GM12878 (cell line): ENCODE measurements at regions of chr1 and their contacts with region 1.

Region 1: GRCh38 chr1:234963180-234963903 is 165.3 kb downstream of the TOMM20 start:
- DNase-seq: peak; percentile 97
- ATAC-seq: peak; percentile 79
- H3K4me3 ChIP-seq: peak overlapping the region; percentile 45; the same call in 1 of the 2 replicates
- H3K27ac ChIP-seq: peak overlapping the region; percentile 96
- H3K4me1 ChIP-seq: peaks cover 59% of the 10 kb centered on the region
- H3K27me3 ChIP-seq: no peaks in the 10 kb centered on the region
- CTCF ChIP-seq: no peak
- EP300 ChIP-seq: peak; percentile 95 to 99
- POLR2A ChIP-seq: no peak
- RAD21 ChIP-seq: 0 out of 2 replicates have a peak, but pooled peaks have one; percentile 24

Region 2: GRCh38 chr1:234373064-234373958 is 590.0 kb before region 1 on chr1 and contains the start of gene COA6:
- CTCF ChIA-PET with region 1: no interaction called
- POLR2A ChIA-PET with region 1: no interaction called
- RAD21 ChIA-PET with region 1: no interaction called
- SMC1A ChIA-PET with region 1: no interaction called
- in situ Hi-C with region 1: no loop called
- intact Hi-C with region 1: no loop called
- DNase-seq: peak; percentile 94
- ATAC-seq: peak; percentile 93
- H3K4me3 ChIP-seq: peak within 1 kb of the TSS; percentile 86
- H3K27ac ChIP-seq: peak within 1 kb of the TSS; percentile 95
- H3K4me1 ChIP-seq: peaks cover 6% of the 10 kb centered on the region; the same call in 1 of the 2 replicates
- H3K27me3 ChIP-seq: no peaks in the 10 kb centered on the region; a peak in 1 of 4 replicates
- CTCF ChIP-seq: no peak; a peak in 1 of 6 replicates
- EP300 ChIP-seq: 0 out of 4 replicates have a peak, but pooled peaks of 1 of the 2 experiments have one; percentile 25
- POLR2A ChIP-seq: peak; percentile 90
- RAD21 ChIP-seq: no peak
- polyA plus RNA-seq, gene COA6: 117 to 145 TPM

Region 3: DNA sequence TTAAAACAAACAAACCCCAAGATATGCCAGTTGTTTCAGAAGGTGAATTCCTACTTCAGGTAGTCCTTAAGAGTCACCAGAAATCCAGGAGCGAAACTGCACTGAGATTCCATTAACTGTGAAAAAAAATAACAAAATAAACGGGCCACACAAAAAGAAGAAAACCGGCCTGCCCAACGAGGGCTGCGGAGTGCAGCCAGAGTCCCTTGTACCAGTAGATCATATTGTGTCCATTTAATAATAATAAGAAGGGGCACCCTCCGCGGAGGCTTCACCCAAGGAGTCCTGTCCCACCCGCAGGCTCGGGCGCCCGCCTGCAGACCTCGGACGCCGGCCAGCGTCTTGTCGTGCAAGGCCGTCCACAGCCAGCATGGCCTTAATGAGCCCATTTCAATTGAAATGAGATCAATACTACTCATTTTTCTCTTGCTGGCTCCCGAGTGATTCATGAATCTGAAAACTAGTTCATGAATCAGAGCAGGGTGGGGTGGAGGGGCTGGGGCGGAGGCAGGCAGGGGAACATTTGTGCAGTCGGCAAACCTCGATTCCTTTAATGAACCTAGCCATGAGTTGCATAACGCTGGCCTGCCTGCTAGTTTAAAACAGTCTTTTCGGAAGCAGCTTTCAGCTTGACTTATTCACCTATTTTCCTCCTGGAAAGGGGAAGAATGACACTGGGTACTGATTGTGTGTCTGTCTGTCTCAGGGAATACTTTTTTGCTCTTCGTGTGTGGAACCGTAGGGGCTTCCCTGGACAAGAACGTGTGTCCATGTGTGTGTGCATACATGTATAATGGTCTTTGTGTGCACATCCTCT is 240.2 kb before region 1 on chr1:
- CTCF ChIA-PET with region 1: no interaction called
- POLR2A ChIA-PET with region 1: interaction called, 4 read pairs
- RAD21 ChIA-PET with region 1: interaction called, 15 read pairs
- SMC1A ChIA-PET with region 1: interaction called, 4 read pairs
- in situ Hi-C with region 1: no loop called
- intact Hi-C with region 1: no loop called
- DNase-seq: no peak
- ATAC-seq: no peak
- H3K4me3 ChIP-seq: no peak overlapping the region
- H3K27ac ChIP-seq: peak overlapping the region; percentile 94
- H3K4me1 ChIP-seq: peaks cover 49% of the 10 kb centered on the region
- H3K27me3 ChIP-seq: no peaks in the 10 kb centered on the region
- CTCF ChIP-seq: no peak
- EP300 ChIP-seq: no peak
- POLR2A ChIP-seq: no peak
- RAD21 ChIP-seq: no peak

Region 4: DNA sequence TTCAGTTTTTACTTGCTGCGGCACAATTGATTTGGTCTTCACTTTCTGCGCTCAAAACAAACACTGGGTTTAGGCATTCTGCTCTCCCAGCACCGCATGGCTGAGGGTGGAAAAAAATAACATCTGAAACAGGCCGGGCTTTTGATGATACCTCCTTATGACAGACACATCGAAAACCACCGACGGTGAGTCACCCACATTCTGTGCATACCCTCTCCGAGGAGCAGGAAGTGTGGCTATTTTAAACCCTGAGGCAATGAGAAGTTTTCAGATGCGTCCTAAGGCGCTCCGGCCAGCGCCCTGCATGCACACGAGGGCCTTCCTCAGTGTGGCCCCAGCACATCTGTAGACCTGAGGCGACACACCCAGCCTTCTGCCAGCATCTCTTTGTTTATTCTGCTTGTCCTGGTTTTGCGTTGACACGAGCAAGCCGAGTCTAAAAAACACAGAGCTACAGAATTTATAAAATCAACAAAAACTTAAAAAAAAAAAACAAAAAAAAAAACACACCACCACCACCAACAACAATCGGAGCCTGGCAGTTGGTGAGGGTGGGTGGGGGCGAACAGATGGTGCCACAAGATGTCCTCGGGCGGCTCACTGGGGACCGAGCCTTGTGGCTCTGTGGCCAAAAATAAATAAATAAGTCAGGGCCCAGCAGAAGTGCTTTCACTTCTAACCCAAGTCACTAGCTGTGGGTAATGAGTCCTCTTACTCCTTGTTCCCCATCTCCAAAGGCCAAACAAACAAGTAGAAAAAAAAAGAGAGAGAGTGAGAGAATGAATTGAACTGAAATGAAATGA is 190.8 kb before region 1 on chr1:
- CTCF ChIA-PET with region 1: interaction called, 3 read pairs
- POLR2A ChIA-PET with region 1: interaction called, 5 read pairs
- RAD21 ChIA-PET with region 1: interaction called, 9 read pairs
- SMC1A ChIA-PET with region 1: interaction called, 7 read pairs
- in situ Hi-C with region 1: no loop called
- intact Hi-C with region 1: loop called (anchors 1 kb)
- DNase-seq: peak; percentile 97
- ATAC-seq: peak; percentile 92
- H3K4me3 ChIP-seq: peak overlapping the region; percentile 13; the same call in 1 of the 2 replicates
- H3K27ac ChIP-seq: peak overlapping the region; percentile 89
- H3K4me1 ChIP-seq: peaks cover 37% of the 10 kb centered on the region
- H3K27me3 ChIP-seq: peaks cover 6 to 11% of the 10 kb centered on the region in 2 experiments; a peak in 3 of 4 replicates
- CTCF ChIP-seq: no peak
- EP300 ChIP-seq: peak; percentile 88 to 93; a peak in 3 of 4 replicates
- POLR2A ChIP-seq: peak; percentile 77
- RAD21 ChIP-seq: 0 out of 2 replicates have a peak, but pooled peaks have one; percentile 13

Region 5: GRCh38 chr1:234871710-234872271 is 91.6 kb before region 1 on chr1:
- CTCF ChIA-PET with region 1: no interaction called
- POLR2A ChIA-PET with region 1: no interaction called
- RAD21 ChIA-PET with region 1: no interaction called
- SMC1A ChIA-PET with region 1: no interaction called
- in situ Hi-C with region 1: no loop called
- intact Hi-C with region 1: no loop called
- DNase-seq: no peak
- ATAC-seq: no peak
- H3K4me3 ChIP-seq: no peak overlapping the region
- H3K27ac ChIP-seq: no peak overlapping the region
- H3K4me1 ChIP-seq: peaks cover 8% of the 10 kb centered on the region
- H3K27me3 ChIP-seq: no peaks in the 10 kb centered on the region
- CTCF ChIP-seq: no peak
- EP300 ChIP-seq: no peak
- POLR2A ChIP-seq: no peak
- RAD21 ChIP-seq: no peak

Region 6: DNA sequence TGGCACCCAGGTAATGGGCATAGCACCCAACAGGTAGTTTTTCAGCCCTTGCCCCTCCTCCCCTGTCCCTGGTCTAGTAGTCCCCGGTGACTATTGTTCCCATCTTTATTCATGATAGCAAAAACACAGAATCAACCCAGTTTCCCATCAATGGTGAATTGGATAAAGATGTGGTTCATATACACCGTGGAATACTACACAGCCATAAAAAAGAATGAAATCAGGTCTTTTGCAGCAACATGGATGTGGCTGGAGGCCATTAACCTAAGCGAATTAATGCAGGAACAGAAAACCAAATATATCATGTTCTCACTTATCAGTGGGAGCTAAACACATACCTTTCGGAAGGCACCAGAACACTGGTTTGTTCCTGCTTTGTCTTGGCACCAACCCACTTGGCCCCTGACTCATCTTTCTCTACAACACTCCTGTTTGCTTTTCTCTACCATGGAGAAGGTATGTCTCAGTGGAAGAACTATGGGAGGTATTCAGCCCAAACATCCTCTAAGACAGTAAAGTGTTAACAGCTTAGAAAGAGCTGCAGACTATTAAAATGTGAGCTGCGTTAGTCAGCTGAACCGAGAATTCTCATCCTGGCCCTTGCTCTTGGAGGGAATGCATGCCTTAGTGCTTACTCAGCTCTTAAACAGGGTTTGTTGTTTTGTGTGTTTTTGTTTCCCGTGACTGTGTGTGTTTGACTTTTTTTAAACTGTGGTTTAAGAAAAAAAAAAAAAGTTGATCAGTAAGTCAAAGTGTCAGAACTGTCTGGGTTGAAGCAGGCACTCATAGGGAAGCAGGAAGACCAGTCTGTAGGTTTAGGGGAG is 37.7 kb before region 1 on chr1:
- CTCF ChIA-PET with region 1: interaction called, 4 read pairs
- POLR2A ChIA-PET with region 1: interaction called, 6 read pairs
- RAD21 ChIA-PET with region 1: interaction called, 48 read pairs
- SMC1A ChIA-PET with region 1: interaction called, 18 read pairs
- in situ Hi-C with region 1: no loop called
- intact Hi-C with region 1: loop called (anchors 2 kb)
- DNase-seq: peak; percentile 40
- ATAC-seq: peak; percentile 1
- H3K4me3 ChIP-seq: peak overlapping the region; percentile 40; the same call in 1 of the 2 replicates
- H3K27ac ChIP-seq: peak overlapping the region; percentile 95
- H3K4me1 ChIP-seq: peaks cover 48% of the 10 kb centered on the region
- H3K27me3 ChIP-seq: no peaks in the 10 kb centered on the region
- CTCF ChIP-seq: no peak
- EP300 ChIP-seq: no peak; a peak in 1 of 4 replicates
- POLR2A ChIP-seq: no peak
- RAD21 ChIP-seq: no peak

Region 7: DNA sequence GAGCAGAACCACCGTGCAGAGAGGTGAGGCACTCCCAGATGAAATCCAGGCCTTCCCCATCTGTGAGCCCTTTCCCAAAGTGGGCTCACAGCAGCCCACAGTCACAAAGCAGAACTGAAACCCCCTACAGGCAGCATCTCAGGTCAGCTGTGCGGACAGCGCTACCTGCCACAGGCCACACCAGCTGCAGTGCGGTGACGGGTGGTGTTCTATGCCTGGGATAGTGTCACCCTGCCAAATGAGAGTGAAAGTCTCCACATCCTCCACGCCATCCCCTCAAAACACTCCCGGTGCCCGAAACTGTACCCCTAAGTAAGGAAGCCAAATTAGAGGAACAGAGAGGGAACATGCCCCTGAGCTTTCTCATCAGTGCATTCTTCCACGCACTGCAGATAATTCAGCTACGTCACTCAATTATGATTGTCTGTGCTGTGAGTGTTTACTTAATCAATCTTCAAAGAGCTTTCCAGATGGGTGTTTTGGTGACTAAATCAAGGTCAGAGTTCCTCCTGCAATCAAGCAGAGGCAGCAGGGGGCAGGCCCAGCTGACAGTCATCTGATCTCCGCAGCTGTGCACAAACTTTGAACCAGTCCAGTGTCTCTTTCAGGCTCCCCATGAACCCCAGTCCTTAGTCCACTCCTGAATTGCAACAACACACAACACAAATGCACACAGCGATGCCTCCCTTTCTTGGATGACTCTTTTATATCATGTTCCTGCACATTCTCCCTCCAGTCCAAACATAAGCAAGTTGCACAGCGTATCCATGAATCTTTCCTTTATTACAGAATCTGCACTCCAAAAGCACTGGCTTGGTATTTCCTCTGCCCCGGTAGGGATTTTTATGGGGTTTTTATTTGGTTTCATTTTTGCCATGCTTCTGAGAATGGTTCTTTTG is 15.3 kb after region 1 on chr1:
- CTCF ChIA-PET with region 1: interaction called, 9 read pairs
- POLR2A ChIA-PET with region 1: interaction called, 108 read pairs
- RAD21 ChIA-PET with region 1: interaction called, 258 read pairs
- SMC1A ChIA-PET with region 1: interaction called, 164 read pairs
- in situ Hi-C with region 1: no loop called
- intact Hi-C with region 1: loop called (anchors 1 kb)
- DNase-seq: peak; percentile 94
- ATAC-seq: peak; percentile 66
- H3K4me3 ChIP-seq: peak overlapping the region; percentile 29
- H3K27ac ChIP-seq: peak overlapping the region; percentile 98
- H3K4me1 ChIP-seq: peaks cover 76% of the 10 kb centered on the region
- H3K27me3 ChIP-seq: no peaks in the 10 kb centered on the region
- CTCF ChIP-seq: peak in 2 of 3 experiments; percentile 13 to 16; a peak in 2 of 6 replicates
- EP300 ChIP-seq: peak; percentile 96 to 99
- POLR2A ChIP-seq: 0 out of 2 replicates have a peak, but pooled peaks have one; percentile 56
- RAD21 ChIP-seq: peak; percentile 44

Region 8: GRCh38 chr1:235006132-235006943 is 43.0 kb after region 1 on chr1:
- CTCF ChIA-PET with region 1: interaction called, 6 read pairs
- POLR2A ChIA-PET with region 1: interaction called, 3 read pairs
- RAD21 ChIA-PET with region 1: interaction called, 257 read pairs
- SMC1A ChIA-PET with region 1: interaction called, 229 read pairs
- in situ Hi-C with region 1: no loop called
- intact Hi-C with region 1: loop called (anchors 1 kb)
- DNase-seq: peak; percentile 74
- ATAC-seq: peak; percentile 44
- H3K4me3 ChIP-seq: no peak overlapping the region
- H3K27ac ChIP-seq: peak overlapping the region; percentile 79
- H3K4me1 ChIP-seq: peaks cover 81% of the 10 kb centered on the region
- H3K27me3 ChIP-seq: no peaks in the 10 kb centered on the region
- CTCF ChIP-seq: no peak
- EP300 ChIP-seq: no peak
- POLR2A ChIP-seq: no peak
- RAD21 ChIP-seq: no peak

Region 9: DNA sequence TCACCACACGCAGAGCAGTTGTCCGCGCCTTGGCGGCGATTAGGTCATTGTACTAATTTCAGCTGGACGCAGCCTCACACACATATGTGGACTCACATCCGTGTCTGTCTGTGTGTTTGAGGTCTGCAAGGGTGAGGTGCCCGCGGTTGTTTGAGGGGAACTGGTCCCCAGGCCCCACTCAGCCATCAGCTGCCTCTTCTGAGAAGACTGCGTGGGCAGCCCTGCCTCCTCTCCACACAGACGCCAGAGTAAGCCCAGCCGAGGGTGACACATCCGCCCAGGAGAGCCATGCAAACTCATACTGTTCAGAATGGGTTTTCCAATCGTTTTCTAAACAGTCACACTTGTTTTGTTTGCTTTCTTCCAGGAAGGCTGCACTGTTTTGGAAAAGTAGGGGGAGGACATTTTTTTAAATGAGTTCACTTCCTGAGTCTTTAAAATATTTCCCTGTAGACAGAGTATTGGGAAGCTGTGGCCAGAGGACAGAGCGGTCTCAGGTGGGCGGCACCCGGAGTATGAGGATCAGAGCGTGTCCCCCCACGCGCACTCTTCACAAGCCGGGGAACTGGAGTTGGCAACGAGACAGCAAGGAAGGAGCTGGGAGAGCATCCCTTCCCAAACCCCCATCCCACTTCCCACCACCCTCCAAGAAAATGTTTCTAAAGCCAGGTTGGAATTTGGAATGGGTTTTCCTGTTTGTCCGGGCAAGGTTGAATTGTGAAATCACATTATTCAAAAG is 112.0 kb after region 1 on chr1:
- CTCF ChIA-PET with region 1: interaction called, 3 read pairs
- POLR2A ChIA-PET with region 1: interaction called, 3 read pairs
- RAD21 ChIA-PET with region 1: interaction called, 6 read pairs
- SMC1A ChIA-PET with region 1: interaction called, 5 read pairs
- in situ Hi-C with region 1: no loop called
- intact Hi-C with region 1: loop called (anchors 2 kb)
- DNase-seq: peak; percentile 98
- ATAC-seq: peak; percentile 77
- H3K4me3 ChIP-seq: peak overlapping the region; percentile 37
- H3K27ac ChIP-seq: peak overlapping the region; percentile 99
- H3K4me1 ChIP-seq: peaks cover 70% of the 10 kb centered on the region
- H3K27me3 ChIP-seq: no peaks in the 10 kb centered on the region
- CTCF ChIP-seq: no peak
- EP300 ChIP-seq: peak; percentile 99 to 100; a peak in 3 of 4 replicates
- POLR2A ChIP-seq: peak; percentile 74
- RAD21 ChIP-seq: no peak

Region 10: DNA sequence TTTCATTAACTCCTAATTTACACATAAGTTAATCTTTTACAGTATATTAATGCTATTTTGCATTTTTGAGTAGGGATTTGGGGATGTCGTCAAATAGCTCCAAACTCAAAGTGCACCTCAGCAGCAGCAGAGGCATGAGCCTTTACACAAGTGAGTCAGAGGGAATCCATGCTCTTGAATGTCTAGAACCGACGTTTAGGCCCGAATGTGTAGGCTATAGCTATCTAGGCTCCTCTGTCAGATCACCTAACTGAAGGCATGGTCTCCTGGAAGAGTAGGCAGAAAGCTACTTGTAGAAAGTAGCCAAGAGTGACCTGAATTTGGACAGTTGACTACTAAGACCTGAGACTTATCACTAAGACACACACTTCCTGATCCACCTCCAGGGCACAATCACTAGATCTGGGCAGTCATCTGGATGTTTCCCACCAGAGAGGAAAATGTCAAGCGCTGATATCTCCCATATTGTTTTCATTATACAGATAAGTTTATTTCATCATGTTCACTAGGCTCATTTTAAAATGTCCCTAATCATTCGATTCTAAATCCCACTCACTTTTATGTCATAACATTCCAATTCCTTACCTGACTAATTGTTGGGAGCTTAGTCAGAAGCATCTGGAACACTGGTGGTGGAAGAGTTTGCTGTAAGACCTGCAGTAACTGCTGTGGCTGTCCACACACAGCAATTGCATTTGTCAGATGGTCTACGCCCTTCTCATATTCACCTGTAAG is 150.0 kb after region 1 on chr1:
- CTCF ChIA-PET with region 1: no interaction called
- POLR2A ChIA-PET with region 1: no interaction called
- RAD21 ChIA-PET with region 1: no interaction called
- SMC1A ChIA-PET with region 1: no interaction called
- in situ Hi-C with region 1: no loop called
- intact Hi-C with region 1: no loop called
- DNase-seq: no peak
- ATAC-seq: no peak
- H3K4me3 ChIP-seq: no peak overlapping the region
- H3K27ac ChIP-seq: no peak overlapping the region
- H3K4me1 ChIP-seq: no peaks in the 10 kb centered on the region
- H3K27me3 ChIP-seq: no peaks in the 10 kb centered on the region
- CTCF ChIP-seq: no peak
- EP300 ChIP-seq: no peak
- POLR2A ChIP-seq: no peak; the same call in 1 of the 2 replicates
- RAD21 ChIP-seq: no peak